Mammary epithelial cell (primary cell): ENCODE measurements at regions of chr3 and their contacts with region 1.

Region 1: GRCh38 chr3:98188545-98188944 is 22.0 kb downstream of the OR5H15 start:
- DNase-seq: peak; percentile 0
- H3K4me3 ChIP-seq: no peak overlapping the region
- H3K27ac ChIP-seq: no peak overlapping the region
- H3K4me1 ChIP-seq: no peaks in the 10 kb centered on the region
- H3K27me3 ChIP-seq: no peaks in the 10 kb centered on the region
- CTCF ChIP-seq: peak in 1 of 2 donors; percentile 35

Region 2: GRCh38 chr3:98329392-98330124 is 141.0 kb after region 1 on chr3:
- CTCF ChIA-PET with region 1: interaction called, 3 read pairs
- dilution Hi-C with region 1: no loop called
- in situ Hi-C with region 1: no loop called
- intact Hi-C with region 1: loop called (anchors 1 kb)
- DNase-seq: peak; percentile 38
- H3K4me3 ChIP-seq: no peak overlapping the region
- H3K27ac ChIP-seq: no peak overlapping the region
- H3K4me1 ChIP-seq: no peaks in the 10 kb centered on the region
- H3K27me3 ChIP-seq: no peaks in the 10 kb centered on the region
- CTCF ChIP-seq: peak; percentile 69 to 83